ENCODE measurements at regions of chr5 and their contacts with region 1.

Region 1: DNA sequence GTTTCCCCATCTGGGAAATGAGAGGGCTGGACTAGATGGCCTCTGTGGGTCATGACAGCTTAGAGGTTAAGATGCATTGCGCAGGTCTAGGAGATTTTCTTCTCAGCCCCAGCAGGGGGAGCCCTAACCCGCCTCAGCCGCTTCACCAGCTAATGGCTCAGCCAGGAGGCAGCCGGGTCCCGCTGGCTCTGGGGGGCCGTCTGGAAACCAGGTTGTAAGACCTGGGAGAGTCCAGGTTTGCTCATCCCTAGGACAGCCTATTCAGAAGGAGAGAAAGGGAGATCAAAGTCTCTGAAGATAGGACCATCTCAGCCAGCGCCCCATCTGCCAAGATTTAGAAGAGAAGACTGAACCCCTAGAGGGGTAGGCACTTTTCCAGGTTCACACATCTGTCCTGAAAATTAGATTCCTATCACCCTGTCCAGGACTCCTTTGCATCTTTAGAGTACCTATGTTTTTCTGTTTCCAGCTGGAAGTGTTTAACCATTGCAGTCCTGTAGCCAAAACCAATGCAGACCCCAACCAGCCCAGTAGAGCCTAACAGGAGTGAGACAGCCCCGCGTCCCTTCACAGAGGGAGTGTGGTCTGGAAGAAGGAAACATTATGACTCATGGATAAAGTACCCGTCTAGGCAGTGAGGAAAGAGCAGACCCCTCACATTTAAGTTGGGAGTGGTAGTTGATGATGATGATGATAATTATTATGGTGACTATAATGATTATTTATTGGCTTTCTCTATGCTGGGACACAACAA is 27.5 kb downstream of the SPARC start:
- DNase-seq: peak; percentile 40 to 84 (median 74)
- ATAC-seq: peak; percentile 95
- H3K4me3 ChIP-seq: no peak overlapping the region
- H3K4me3 Mint-ChIP-seq: no peak overlapping the region
- H3K27ac ChIP-seq: no peak overlapping the region
- H3K27ac Mint-ChIP-seq: no peak overlapping the region
- H3K4me1 ChIP-seq: no peaks in the 10 kb centered on the region
- H3K4me1 Mint-ChIP-seq: peaks cover 9 to 19% (median 14%) of the 10 kb centered on the region in 7 donors
- H3K27me3 ChIP-seq: no peaks in the 10 kb centered on the region
- H3K27me3 Mint-ChIP-seq: peaks cover 0 to 19% (median 6%) of the 10 kb centered on the region in 5 donors

Region 2: DNA sequence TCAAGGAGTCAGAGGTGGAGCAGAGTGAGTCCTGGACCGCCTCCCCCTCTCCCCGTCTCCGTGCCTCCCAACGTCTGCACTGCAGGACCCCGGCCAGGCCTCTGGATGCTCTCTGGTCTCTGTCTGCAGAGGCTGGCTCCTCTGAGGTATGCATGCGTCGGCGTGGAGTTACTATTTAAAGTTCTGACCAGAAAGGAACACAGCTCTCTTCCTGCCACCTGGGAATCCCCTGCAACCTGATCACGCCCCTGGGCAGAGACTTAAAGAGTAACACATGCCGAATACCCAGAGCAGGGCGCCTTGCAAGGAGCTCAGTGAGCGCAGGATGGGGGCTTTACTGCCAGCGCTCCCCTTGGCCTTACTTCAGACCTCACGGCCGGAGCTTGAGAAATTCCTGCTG is 517.6 kb before region 1 on chr5:
- CTCF ChIA-PET with region 1: no interaction called
- POLR2A ChIA-PET with region 1: no interaction called
- intact Hi-C with region 1: no loop called
- DNase-seq: peak in 7 of 9 donors; percentile 39 to 62 (median 53)
- ATAC-seq: peak; percentile 80
- H3K4me3 ChIP-seq: peak overlapping the region; percentile 44
- H3K4me3 Mint-ChIP-seq: peak overlapping the region; percentile 68 to 96 (median 88)
- H3K27ac ChIP-seq: peak overlapping the region; percentile 67
- H3K27ac Mint-ChIP-seq: peak overlapping the region; percentile 81 to 99 (median 92)
- H3K4me1 ChIP-seq: peaks cover 85 to 88% of the 10 kb centered on the region in 2 donors
- H3K4me1 Mint-ChIP-seq: peaks cover 84 to 100% (median 96%) of the 10 kb centered on the region in 7 donors
- H3K27me3 ChIP-seq: no peaks in the 10 kb centered on the region
- H3K27me3 Mint-ChIP-seq: no peaks in the 10 kb centered on the region

Region 3: DNA sequence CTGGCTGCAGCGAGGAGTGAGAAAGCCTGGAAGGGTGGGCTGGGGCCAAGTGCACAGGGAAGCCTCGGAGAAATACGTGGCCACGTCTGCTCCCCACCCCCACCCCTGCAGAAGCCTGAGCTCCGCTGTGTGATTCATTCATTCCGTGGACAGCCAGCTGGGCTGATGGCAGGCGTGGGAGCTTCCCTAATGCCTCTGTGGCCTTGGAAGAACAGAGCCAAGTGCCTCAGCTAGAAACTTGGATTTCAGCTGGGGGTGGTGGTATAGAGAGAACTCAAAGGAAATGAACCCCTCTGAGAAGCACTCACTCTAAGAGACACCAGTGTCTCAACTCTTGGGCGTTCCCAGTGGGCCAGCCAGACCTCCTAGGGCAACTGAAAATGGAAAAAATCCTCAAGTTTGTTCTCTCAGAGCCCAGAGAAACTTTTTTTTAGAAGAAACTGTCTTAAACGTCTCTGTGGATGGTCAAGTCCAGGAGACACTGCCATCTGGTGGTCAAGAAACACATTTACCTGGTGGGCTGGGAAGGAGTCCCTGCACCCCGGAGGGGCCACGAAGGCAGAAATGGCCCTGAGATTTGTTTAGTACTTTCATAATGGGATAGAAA is 81.3 kb after region 1 on chr5:
- CTCF ChIA-PET with region 1: interaction called, 14 read pairs
- POLR2A ChIA-PET with region 1: no interaction called
- intact Hi-C with region 1: loop called (anchors 1 kb)
- DNase-seq: peak in 7 of 9 donors; percentile 9 to 57 (median 47)
- ATAC-seq: peak; percentile 71
- H3K4me3 ChIP-seq: no peak overlapping the region
- H3K4me3 Mint-ChIP-seq: no peak overlapping the region
- H3K27ac ChIP-seq: no peak overlapping the region
- H3K27ac Mint-ChIP-seq: peak overlapping the region in 1 of 9 donors; percentile 23
- H3K4me1 ChIP-seq: peaks cover 5 to 8% of the 10 kb centered on the region in 2 donors
- H3K4me1 Mint-ChIP-seq: peaks cover 5 to 30% (median 20%) of the 10 kb centered on the region in 7 donors
- H3K27me3 ChIP-seq: no peaks in the 10 kb centered on the region
- H3K27me3 Mint-ChIP-seq: no peaks in the 10 kb centered on the region

Region 4: GRCh38 chr5:151811593-151812321 is 152.6 kb after region 1 on chr5:
- CTCF ChIA-PET with region 1: no interaction called
- POLR2A ChIA-PET with region 1: no interaction called
- intact Hi-C with region 1: no loop called
- DNase-seq: no peak
- ATAC-seq: no peak
- H3K4me3 ChIP-seq: no peak overlapping the region
- H3K4me3 Mint-ChIP-seq: no peak overlapping the region
- H3K27ac ChIP-seq: no peak overlapping the region
- H3K27ac Mint-ChIP-seq: no peak overlapping the region
- H3K4me1 ChIP-seq: no peaks in the 10 kb centered on the region
- H3K4me1 Mint-ChIP-seq: peaks cover 0 to 17% (median 5%) of the 10 kb centered on the region in 7 donors
- H3K27me3 ChIP-seq: no peaks in the 10 kb centered on the region
- H3K27me3 Mint-ChIP-seq: no peaks in the 10 kb centered on the region

Region 5: GRCh38 chr5:152142840-152143469 is 483.8 kb after region 1 on chr5:
- CTCF ChIA-PET with region 1: interaction called, 8 read pairs
- POLR2A ChIA-PET with region 1: no interaction called
- intact Hi-C with region 1: loop called (anchors 1 kb)
- DNase-seq: peak; percentile 21 to 56 (median 44)
- ATAC-seq: peak; percentile 73
- H3K4me3 ChIP-seq: no peak overlapping the region
- H3K4me3 Mint-ChIP-seq: no peak overlapping the region
- H3K27ac ChIP-seq: no peak overlapping the region
- H3K27ac Mint-ChIP-seq: no peak overlapping the region
- H3K4me1 ChIP-seq: no peaks in the 10 kb centered on the region
- H3K4me1 Mint-ChIP-seq: peaks cover 0 to 2% (median 0%) of the 10 kb centered on the region in 7 donors
- H3K27me3 ChIP-seq: no peaks in the 10 kb centered on the region
- H3K27me3 Mint-ChIP-seq: peaks cover 0 to 7% (median 0%) of the 10 kb centered on the region in 5 donors

Region 6: GRCh38 chr5:152271420-152271819 is 612.2 kb after region 1 on chr5:
- CTCF ChIA-PET with region 1: no interaction called
- POLR2A ChIA-PET with region 1: no interaction called
- intact Hi-C with region 1: loop called in 1 of 2 experiments (anchors 2 kb)
- DNase-seq: no peak
- ATAC-seq: no peak
- H3K4me3 ChIP-seq: no peak overlapping the region
- H3K4me3 Mint-ChIP-seq: no peak overlapping the region
- H3K27ac ChIP-seq: no peak overlapping the region
- H3K27ac Mint-ChIP-seq: no peak overlapping the region
- H3K4me1 ChIP-seq: no peaks in the 10 kb centered on the region
- H3K4me1 Mint-ChIP-seq: no peaks in the 10 kb centered on the region
- H3K27me3 ChIP-seq: no peaks in the 10 kb centered on the region
- H3K27me3 Mint-ChIP-seq: peaks cover 0 to 8% (median 0%) of the 10 kb centered on the region in 5 donors

Region 7: GRCh38 chr5:152349683-152350526 is 690.7 kb after region 1 on chr5:
- CTCF ChIA-PET with region 1: no interaction called
- POLR2A ChIA-PET with region 1: no interaction called
- intact Hi-C with region 1: loop called in 1 of 2 experiments (anchors 2 kb)
- DNase-seq: no peak
- ATAC-seq: no peak
- H3K4me3 ChIP-seq: no peak overlapping the region
- H3K4me3 Mint-ChIP-seq: no peak overlapping the region
- H3K27ac ChIP-seq: no peak overlapping the region
- H3K27ac Mint-ChIP-seq: no peak overlapping the region
- H3K4me1 ChIP-seq: no peaks in the 10 kb centered on the region
- H3K4me1 Mint-ChIP-seq: no peaks in the 10 kb centered on the region
- H3K27me3 ChIP-seq: no peaks in the 10 kb centered on the region
- H3K27me3 Mint-ChIP-seq: peaks cover 3 to 13% (median 6%) of the 10 kb centered on the region in 5 donors

Region 8: DNA sequence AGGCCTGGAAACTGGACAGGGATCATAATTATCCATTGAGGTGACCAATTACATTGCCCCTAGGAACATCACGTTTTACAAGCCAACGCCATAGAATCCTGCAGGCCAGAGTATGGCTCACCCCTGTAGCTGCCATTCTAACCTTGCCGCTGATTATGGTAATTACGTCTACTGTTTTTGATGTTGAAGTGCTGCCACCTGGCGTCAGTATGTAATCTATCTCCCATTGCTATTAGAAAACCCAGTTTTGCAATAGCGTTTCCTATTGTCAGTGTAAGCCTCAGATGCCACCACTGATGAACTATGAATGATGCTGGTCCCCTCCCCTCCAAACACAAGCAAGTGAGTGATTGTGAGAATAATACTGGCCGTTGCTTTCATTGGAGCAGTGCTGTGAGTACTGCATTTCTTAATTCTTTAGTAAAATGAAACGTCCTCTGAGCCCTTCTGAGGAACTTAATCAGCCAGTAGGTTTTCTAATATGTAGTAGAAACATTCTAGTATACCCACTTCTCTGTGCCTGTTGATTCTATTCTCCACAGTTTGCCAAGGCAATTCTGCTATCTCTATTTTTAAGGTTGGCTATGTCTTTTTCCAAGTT is 846.4 kb after region 1 on chr5:
- CTCF ChIA-PET with region 1: no interaction called
- POLR2A ChIA-PET with region 1: no interaction called
- intact Hi-C with region 1: loop called (anchors 1 to 5 kb)
- DNase-seq: peak in 5 of 9 donors; percentile 4 to 30 (median 8)
- ATAC-seq: peak; percentile 72
- H3K4me3 ChIP-seq: no peak overlapping the region
- H3K4me3 Mint-ChIP-seq: no peak overlapping the region
- H3K27ac ChIP-seq: no peak overlapping the region
- H3K27ac Mint-ChIP-seq: no peak overlapping the region
- H3K4me1 ChIP-seq: no peaks in the 10 kb centered on the region
- H3K4me1 Mint-ChIP-seq: peaks cover 0 to 3% (median 0%) of the 10 kb centered on the region in 7 donors
- H3K27me3 ChIP-seq: no peaks in the 10 kb centered on the region
- H3K27me3 Mint-ChIP-seq: peaks cover 10 to 28% (median 21%) of the 10 kb centered on the region in 5 donors

Region 9: DNA sequence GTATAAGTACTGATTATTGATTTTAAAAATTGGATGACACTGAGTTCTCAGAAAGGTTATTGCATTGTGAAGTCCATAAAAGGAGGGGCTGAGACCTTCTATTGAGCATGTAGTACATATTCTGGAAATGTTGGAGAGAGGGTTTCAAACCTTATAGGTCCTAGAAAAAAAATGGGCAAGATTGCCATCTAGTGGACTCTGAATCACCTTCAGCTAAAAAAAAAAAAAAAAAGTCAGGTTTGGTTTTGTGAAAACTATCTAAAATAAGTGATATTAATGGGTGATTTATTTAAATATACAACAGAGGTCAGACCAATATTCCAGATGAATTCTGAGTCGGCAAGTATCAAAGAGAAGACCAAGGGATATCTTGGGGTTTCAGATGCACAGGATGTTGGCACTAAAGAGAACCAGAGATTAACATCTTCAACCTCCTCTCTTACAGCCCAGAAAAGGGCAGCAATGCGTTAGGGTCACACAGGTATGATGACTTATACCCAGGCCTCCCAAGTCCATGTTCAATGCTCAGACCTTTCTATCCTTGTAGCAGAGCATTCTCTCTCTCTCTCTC is 855.7 kb after region 1 on chr5:
- CTCF ChIA-PET with region 1: no interaction called
- POLR2A ChIA-PET with region 1: no interaction called
- intact Hi-C with region 1: loop called in 1 of 2 experiments (anchors 2 kb)
- DNase-seq: no peak
- ATAC-seq: no peak
- H3K4me3 ChIP-seq: no peak overlapping the region
- H3K4me3 Mint-ChIP-seq: no peak overlapping the region
- H3K27ac ChIP-seq: no peak overlapping the region
- H3K27ac Mint-ChIP-seq: no peak overlapping the region
- H3K4me1 ChIP-seq: no peaks in the 10 kb centered on the region
- H3K4me1 Mint-ChIP-seq: peaks cover 0 to 2% (median 0%) of the 10 kb centered on the region in 7 donors
- H3K27me3 ChIP-seq: no peaks in the 10 kb centered on the region
- H3K27me3 Mint-ChIP-seq: peaks cover 10 to 27% (median 20%) of the 10 kb centered on the region in 5 donors